ENCODE measurements at regions of chr2 and their contacts with region 1.

Region 1: GRCh38 chr2:235595422-235596010 is 101.7 kb downstream of the AGAP1 start:
- H3K4me3 ChIP-seq: no peak overlapping the region
- H3K27ac ChIP-seq: no peak overlapping the region
- H3K4me1 ChIP-seq: 0 out of 2 replicates have a peak, but pooled peaks cover 2% of the 10 kb centered on the region
- CTCF ChIP-seq: peak; percentile 77

Region 2: GRCh38 chr2:235135990-235136561 is 459.4 kb before region 1 on chr2:
- CTCF ChIA-PET with region 1: interaction called, 72 read pairs
- POLR2A ChIA-PET with region 1: no interaction called
- H3K4me3 ChIP-seq: no peak overlapping the region
- H3K27ac ChIP-seq: no peak overlapping the region
- H3K4me1 ChIP-seq: no peaks in the 10 kb centered on the region
- CTCF ChIP-seq: peak; percentile 56; the same call in 1 of the 2 replicates

Region 3: GRCh38 chr2:235618039-235618438 is 22.5 kb after region 1 on chr2:
- CTCF ChIA-PET with region 1: interaction called, 12 read pairs
- POLR2A ChIA-PET with region 1: no interaction called
- H3K4me3 ChIP-seq: no peak overlapping the region
- H3K27ac ChIP-seq: no peak overlapping the region
- H3K4me1 ChIP-seq: 0 out of 2 replicates have a peak, but pooled peaks cover 2% of the 10 kb centered on the region
- CTCF ChIP-seq: no peak

Region 4: DNA sequence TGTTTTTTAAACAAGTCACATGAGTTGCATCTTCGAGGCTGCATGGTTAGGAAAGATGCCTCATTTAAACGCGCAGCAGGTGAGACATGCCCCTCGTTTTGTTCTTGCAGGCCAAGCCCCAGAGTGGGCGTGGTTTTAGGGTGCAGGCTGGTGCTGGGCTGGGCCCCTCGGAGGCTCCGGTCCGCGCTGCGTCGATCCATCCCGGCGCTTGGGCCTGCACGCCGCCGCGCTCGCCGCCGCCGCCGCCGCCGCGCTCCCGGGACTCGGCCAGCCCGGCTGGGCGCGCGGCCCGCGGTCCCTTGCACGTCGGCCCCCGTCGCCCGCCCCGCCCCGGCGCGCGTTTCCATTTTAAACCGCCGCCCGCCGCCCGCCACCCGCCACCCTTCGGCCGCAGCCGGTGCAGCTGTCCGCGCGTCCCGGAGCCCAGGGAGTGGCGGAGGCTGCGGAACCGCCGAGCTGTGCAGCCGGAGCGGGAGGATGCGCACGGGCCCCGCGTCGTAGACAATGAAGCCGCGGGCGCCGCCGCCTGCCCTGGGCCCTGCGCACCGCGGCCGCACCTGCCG is 73.8 kb after region 1 on chr2:
- CTCF ChIA-PET with region 1: interaction called, 17 read pairs
- POLR2A ChIA-PET with region 1: no interaction called
- H3K4me3 ChIP-seq: peak overlapping the region; percentile 59
- H3K27ac ChIP-seq: no peak overlapping the region; the same call in 1 of the 2 replicates
- H3K4me1 ChIP-seq: peaks cover 3% of the 10 kb centered on the region; the same call in 1 of the 2 replicates
- CTCF ChIP-seq: no peak